ENCODE measurements at regions of chr10 and their contacts with region 1.

Region 1: GRCh38 chr10:22252224-22252800 is 34.5 kb upstream of the EBLN1 start:
- DNase-seq: peak in 2 of 3 donors; percentile 69 to 77
- H3K4me3 ChIP-seq: peak overlapping the region; percentile 70 to 87 (median 85)
- H3K27ac ChIP-seq: peak overlapping the region; percentile 99
- H3K4me1 ChIP-seq: peaks cover 11 to 52% (median 17%) of the 10 kb centered on the region in 4 experiments
- H3K27me3 ChIP-seq: no peaks in the 10 kb centered on the region

Region 2: DNA sequence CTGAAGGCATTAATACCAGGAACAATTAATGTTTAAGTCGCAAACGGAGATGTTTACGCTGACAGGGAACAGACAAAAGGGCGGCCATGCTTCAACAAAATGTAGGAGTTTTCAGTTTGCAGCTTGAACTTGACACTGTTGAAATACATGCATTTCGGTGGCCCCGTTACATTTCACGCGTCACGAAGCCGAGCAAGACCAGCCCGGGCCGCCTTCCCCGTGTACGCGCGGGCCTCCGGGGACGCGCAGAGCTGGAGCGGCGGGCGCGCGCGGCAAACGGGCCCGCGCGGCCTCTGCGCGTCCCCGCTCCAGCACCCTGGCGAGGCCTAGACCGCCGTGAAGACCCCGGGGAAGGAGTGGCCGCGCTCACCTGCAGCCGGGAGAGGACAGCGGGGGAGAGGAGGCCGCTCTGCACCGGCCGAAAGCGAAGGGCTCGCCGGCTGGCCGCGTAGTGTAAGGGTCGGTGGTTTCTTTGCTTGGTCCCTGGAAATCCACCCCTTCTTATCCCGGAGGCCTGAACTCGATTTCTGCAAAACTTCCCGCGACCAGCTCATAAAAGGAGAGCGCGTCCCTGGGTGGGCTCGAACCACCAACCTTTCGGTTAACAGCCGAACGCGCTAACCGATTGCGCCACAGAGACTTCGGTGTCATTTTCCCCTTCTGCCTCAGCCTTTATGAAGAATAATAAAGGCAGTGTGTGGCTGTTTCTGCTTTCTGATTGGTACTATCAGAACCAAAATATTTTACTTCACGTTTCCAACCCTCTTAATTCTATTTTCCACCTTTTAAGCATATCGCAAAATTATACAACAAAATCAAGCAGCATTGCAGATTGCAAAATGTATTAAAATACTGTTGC is 23.1 kb before region 1 on chr10:
- CTCF ChIA-PET with region 1: interaction called, 10 read pairs
- POLR2A ChIA-PET with region 1: no interaction called
- DNase-seq: peak; percentile 90 to 95 (median 95)
- H3K4me3 ChIP-seq: peak overlapping the region; percentile 82 to 96 (median 86)
- H3K27ac ChIP-seq: peak overlapping the region; percentile 50 to 89
- H3K4me1 ChIP-seq: peaks cover 8 to 26% (median 14%) of the 10 kb centered on the region in 4 experiments
- H3K27me3 ChIP-seq: no peaks in the 10 kb centered on the region

Region 3: DNA sequence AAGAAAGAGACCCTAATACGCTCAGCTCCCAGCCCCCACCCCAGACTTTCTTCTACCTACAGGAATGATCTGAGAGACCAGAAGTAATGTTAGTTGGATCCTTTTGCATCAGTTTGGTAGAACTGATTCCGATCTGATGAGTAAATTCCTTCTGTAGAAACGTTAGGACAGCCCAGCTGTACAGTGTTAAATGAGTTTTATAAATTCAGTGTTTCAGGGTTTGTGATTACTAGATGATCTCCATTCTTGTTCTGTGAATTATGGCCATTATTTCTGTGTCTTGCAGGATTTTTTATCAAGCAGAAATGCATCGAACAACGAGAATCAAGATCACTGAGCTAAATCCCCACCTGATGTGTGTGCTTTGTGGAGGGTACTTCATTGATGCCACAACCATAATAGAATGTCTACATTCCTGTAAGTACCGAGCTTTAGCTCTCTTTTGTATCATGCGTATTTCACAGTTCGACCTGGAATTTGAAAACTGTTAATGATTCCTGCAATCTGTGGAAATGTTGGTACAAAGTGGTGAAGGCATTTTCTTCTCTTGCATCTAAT is 73.9 kb after region 1 on chr10:
- CTCF ChIA-PET with region 1: no interaction called
- POLR2A ChIA-PET with region 1: no interaction called
- DNase-seq: no peak
- H3K4me3 ChIP-seq: peak overlapping the region in 6 of 7 experiments; percentile 67 to 90 (median 72)
- H3K27ac ChIP-seq: peak overlapping the region; percentile 33 to 71
- H3K4me1 ChIP-seq: peaks cover 24 to 45% (median 29%) of the 10 kb centered on the region in 4 experiments
- H3K27me3 ChIP-seq: peaks cover 7 to 21% (median 9%) of the 10 kb centered on the region in 5 experiments

Measured in common myeloid progenitor, CD34-positive (primary cell).